ENCODE measurements at regions of chr12 and their contacts with region 1.

Region 1: DNA sequence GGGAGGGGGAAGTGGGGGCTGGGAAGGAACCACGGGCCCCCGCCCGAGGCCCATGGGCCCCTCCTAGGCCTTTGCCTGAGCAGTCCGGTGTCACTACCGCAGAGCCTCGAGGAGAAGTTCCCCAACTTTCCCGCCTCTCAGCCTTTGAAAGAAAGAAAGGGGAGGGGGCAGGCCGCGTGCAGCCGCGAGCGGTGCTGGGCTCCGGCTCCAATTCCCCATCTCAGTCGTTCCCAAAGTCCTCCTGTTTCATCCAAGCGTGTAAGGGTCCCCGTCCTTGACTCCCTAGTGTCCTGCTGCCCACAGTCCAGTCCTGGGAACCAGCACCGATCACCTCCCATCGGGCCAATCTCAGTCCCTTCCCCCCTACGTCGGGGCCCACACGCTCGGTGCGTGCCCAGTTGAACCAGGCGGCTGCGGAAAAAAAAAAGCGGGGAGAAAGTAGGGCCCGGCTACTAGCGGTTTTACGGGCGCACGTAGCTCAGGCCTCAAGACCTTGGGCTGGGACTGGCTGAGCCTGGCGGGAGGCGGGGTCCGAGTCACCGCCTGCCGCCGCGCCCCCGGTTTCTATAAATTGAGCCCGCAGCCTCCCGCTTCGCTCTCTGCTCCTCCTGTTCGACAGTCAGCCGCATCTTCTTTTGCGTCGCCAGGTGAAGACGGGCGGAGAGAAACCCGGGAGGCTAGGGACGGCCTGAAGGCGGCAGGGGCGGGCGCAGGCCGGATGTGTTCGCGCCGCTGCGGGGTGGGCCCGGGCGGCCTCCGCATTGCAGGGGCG is at the start of gene GAPDH:
- DNase-seq: peak; percentile 95
- CTCF ChIP-seq: no peak

Region 2: GRCh38 chr12:6423267-6424007 is 110.7 kb before region 1 on chr12:
- CTCF ChIA-PET with region 1: interaction called, 112 read pairs
- POLR2A ChIA-PET with region 1: interaction called, 5 read pairs
- DNase-seq: peak; percentile 85
- CTCF ChIP-seq: peak; percentile 83

Region 3: DNA sequence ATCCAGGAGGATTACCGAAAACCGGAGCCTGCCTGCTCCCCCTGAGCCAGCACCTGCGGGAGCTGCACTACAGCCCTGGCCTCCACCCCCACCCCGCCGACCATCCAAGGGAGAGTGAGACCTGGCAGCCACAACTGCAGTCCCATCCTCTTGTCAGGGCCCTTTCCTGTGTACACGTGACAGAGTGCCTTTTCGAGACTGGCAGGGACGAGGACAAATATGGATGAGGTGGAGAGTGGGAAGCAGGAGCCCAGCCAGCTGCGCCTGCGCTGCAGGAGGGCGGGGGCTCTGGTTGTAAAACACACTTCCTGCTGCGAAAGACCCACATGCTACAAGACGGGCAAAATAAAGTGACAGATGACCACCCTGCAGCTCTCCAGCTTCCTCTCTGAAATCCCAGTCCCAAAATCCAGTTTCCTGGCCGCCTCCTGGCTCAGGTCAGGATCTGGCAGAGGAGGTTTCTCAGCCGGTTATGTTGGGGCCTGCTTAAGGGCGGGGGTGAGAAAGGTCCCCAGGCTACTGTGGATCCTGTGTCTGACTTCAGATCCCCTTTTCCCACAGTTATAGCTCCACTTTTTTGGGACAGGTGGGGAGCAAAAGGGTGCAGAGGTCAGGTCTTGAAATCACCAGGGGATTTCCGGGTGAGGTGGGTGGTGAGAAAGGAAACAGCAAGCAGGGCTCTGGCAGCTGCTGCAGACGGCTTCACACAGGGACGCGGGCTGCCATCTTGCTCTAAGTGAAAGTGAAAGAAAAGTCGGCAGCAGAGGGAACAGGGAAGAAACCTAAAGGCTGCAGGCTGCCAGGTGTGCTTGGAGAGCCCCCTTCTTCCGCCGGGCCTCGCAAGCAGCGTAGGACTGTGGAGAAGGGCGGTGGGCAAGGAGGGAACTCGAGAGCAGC is 82.5 kb before region 1 on chr12 and contains the start of gene TAPBPL:
- CTCF ChIA-PET with region 1: interaction called, 5 read pairs
- POLR2A ChIA-PET with region 1: interaction called, 12 read pairs
- DNase-seq: peak; percentile 84
- CTCF ChIP-seq: no peak

Region 4: DNA sequence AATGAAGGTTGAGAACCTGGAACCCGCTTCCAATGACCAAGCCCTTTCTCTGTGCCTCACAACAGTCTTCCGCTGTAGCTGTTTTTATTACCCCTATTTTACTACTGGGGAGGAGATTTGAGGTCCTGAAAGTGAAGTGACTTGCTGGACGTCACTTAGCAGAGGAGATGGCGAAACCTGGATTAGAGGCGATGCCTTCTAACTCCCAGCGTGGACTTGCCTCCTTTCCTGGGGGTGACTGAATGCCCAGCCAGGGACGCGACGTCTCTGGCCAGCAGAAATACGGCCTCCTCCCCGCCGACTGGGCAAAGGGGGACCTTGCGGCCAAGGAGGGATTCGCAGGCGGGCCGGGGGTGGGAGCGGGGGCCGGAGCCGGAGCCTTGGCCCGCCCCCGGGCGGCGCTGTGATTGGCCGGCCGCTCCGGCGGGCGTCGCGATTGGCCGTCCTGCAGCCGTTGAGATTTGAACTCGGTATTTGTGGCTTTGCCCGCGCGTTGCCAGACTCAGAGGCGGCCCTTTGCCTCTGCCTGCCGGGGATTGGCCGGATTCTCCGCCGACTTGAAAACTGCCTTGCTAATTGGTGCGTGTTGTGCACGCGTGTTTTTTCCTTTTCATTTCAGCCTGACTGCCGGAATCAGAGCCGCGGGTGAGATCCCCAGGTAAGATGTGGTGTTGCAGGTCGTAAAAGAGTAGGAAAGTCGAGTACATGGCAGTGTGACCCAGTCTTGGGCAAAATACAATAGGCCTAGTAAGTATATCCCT is 40.4 kb before region 1 on chr12 and contains the start of gene NCAPD2:
- CTCF ChIA-PET with region 1: interaction called, 13 read pairs
- POLR2A ChIA-PET with region 1: interaction called, 16 read pairs
- DNase-seq: peak; percentile 96
- CTCF ChIP-seq: no peak

Region 5: DNA sequence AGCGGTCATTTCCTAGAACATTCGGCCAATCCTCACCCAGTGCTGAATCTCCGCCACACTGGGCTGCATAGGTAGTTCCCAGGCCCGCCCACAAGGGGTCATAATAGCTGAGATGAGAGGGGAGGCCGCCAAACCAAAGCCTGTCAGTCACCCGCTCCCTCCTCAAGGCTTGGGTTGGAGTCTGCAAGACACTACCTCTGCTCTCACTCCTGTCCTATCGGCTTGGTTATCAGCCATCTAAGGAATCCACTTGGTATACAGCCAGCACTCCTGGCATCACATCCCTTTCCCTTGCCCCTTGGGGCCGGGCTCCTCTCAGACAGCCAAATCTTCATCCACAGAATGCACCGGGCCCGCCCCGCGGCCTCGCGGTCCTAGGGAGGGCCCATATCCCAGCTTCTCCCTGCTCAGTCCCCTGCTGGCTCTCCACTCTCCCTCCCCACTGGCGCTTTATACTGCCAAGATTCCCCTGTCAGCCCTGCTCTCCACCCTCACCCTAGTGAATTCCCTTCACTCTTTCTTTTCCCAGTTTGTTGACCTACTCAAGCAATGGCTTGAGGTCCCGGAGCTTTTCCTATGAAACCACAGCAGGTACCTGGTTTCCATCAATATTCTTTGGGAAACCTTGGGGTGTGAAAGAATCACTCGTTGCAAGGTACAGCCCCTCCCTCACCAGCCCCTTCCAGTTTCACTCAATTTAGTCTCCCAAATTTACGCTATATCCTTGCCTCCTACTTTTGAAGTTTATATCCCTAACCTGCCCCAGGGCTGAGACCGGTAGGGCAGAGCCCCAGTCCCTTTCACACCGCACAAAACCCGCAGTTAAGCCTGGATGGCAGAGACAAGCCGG is 20.3 kb after region 1 on chr12:
- CTCF ChIA-PET with region 1: interaction called, 280 read pairs
- POLR2A ChIA-PET with region 1: interaction called, 9 read pairs
- DNase-seq: peak; percentile 88
- CTCF ChIP-seq: peak; percentile 77

Region 6: DNA sequence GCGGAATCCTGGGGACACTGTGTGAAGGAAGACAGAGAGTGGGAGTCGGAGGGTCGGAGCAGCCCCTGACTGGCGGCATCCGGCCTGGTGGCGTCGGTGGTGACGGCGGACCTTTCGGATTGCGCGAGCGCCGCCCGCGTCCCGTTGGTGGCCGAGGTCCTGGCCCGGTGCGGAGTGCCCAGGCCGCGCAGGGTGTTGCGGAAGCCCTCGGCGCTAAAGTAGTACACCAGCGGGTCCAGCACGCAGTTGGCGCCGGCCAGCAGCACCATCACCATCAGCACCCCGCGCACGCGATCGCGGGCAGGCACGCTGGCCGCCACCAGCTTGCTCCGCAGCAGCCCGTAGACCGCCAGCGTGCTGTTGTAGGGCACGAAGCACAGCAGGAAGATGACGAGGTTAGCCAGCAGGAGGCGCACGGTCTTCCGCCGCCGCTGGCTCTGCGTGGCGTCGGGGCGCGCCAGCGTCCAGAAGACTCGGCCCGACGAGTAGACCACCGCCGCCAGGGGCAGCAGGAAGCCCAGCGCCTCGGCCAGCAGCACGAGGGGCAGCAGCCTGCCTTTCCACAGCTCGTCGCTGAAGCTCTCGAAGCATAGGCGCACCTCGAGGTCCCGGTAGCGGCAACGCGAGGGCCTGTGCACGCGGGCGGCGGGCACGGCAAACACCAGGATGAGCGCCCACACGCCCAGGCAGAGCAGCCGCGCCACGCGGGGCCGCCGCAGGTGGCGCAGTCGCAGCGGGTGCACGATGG is 86.2 kb after region 1 on chr12:
- CTCF ChIA-PET with region 1: no interaction called
- POLR2A ChIA-PET with region 1: no interaction called
- DNase-seq: no peak
- CTCF ChIP-seq: peak; percentile 19

Region 7: GRCh38 chr12:6688999-6689882 is 155.1 kb after region 1 on chr12 and contains the start of gene ZNF384:
- CTCF ChIA-PET with region 1: no interaction called
- POLR2A ChIA-PET with region 1: interaction called, 11 read pairs
- DNase-seq: peak; percentile 96
- CTCF ChIP-seq: peak; percentile 2